CD14-positive monocyte (primary cell): ENCODE measurements at regions of chr11 and their contacts with region 1.

Region 1: DNA sequence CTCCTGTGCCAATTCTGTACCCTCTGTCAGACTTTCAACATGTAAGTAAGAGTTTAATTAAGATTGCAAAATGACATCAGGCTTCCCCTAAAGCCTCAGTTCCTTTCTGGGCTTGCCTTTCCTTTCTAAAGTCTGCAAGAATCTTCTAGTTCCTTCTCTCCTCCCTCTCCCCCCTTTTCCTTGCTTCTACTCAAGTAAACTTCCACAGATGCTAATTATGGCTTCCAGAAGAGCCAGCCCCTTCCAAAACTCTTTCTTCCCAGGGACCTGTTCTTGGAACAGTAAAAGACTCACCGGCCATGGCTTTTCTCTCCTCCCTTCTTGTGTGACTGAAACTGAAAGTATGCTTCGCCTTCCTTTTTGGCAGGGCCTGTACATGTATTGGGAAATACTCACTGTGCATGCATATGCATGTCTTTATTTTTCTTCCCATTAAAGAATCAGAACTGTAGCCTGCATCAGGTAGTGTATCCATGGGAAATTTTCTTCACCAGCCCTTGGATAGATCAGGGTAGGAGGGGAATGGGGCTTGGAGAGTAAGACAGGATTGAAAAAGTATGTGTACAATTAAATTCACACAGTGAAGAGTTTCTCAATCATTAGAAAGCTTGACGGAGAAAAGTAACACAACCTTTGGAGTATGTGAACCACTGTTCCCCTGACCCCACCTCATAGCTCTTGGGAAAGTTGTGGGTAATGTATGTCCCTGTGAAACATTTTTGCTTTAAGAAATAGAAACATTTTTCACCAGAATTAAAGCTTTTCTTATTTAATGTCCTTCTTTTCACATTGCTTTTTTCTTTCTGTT is at the start of gene CASP1:
- DNase-seq: peak; percentile 59 to 83 (median 76)
- H3K4me3 ChIP-seq: peak within 1 kb of the TSS; percentile 59 to 99 (median 81)
- H3K4me3 Mint-ChIP-seq: peak within 1 kb of the TSS; percentile 98 to 99
- H3K27ac ChIP-seq: peak within 1 kb of the TSS; percentile 69 to 89
- H3K27ac Mint-ChIP-seq: peak within 1 kb of the TSS; percentile 89 to 100 (median 99)
- H3K4me1 ChIP-seq: peaks cover 40 to 74% of the 10 kb centered on the region in 2 donors
- H3K4me1 Mint-ChIP-seq: peaks cover 64% of the 10 kb centered on the region
- H3K27me3 ChIP-seq: no peaks in the 10 kb centered on the region
- H3K27me3 Mint-ChIP-seq: peaks cover 0 to 1% (median 0%) of the 10 kb centered on the region in 3 donors
- CTCF ChIP-seq: no peak
- polyA plus RNA-seq, gene CASP1: 210 to 460 (median 433) TPM

Region 2: GRCh38 chr11:104843150-104843836 is 191.7 kb before region 1 on chr11:
- intact Hi-C with region 1: loop called in 1 of 2 experiments (anchors 10 kb)
- DNase-seq: peak in 2 of 3 donors; percentile 37 to 38
- H3K4me3 ChIP-seq: no peak overlapping the region
- H3K4me3 Mint-ChIP-seq: no peak overlapping the region
- H3K27ac ChIP-seq: peak overlapping the region in 1 of 2 donors; percentile 64
- H3K27ac Mint-ChIP-seq: peak overlapping the region in 5 of 7 donors; percentile 18 to 79 (median 41)
- H3K4me1 ChIP-seq: peaks cover 21 to 40% of the 10 kb centered on the region in 2 donors
- H3K4me1 Mint-ChIP-seq: peaks cover 30% of the 10 kb centered on the region
- H3K27me3 ChIP-seq: no peaks in the 10 kb centered on the region
- H3K27me3 Mint-ChIP-seq: no peaks in the 10 kb centered on the region
- CTCF ChIP-seq: no peak

Region 3: DNA sequence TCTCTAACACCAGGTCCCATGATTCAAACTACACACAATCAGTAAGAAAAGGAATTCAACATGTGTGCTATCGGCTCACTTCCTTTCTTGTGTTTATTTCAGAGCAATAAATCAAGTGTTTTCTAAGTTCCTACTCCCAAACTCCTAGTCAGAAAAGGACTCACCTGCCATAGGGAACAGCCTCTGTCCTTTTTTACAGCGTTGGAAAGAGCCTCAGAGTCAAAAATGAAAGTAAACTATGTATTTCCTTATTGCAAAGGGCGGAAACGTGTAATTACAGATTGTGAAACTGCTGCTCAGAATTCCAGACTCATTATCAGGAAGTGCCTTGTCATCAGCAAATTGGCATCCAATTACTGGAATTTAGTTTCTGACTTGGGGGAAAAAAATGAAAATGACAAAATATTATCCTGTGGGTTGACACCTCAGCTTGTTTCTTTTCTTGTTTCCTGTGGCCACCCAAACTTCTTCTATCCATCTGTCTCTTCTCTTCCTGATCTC is 66.6 kb before region 1 on chr11 and contains the start of gene CASP4:
- intact Hi-C with region 1: loop called in 1 of 2 experiments (anchors 5 kb)
- DNase-seq: peak; percentile 75 to 97 (median 92)
- H3K4me3 ChIP-seq: peak within 1 kb of the TSS; percentile 77 to 99 (median 78)
- H3K4me3 Mint-ChIP-seq: peak within 1 kb of the TSS; percentile 84 to 89
- H3K27ac ChIP-seq: peak within 1 kb of the TSS; percentile 31 to 96
- H3K27ac Mint-ChIP-seq: peak within 1 kb of the TSS; percentile 95 to 99 (median 97)
- H3K4me1 ChIP-seq: peaks cover 20 to 31% of the 10 kb centered on the region in 2 donors
- H3K4me1 Mint-ChIP-seq: peaks cover 38% of the 10 kb centered on the region
- H3K27me3 ChIP-seq: no peaks in the 10 kb centered on the region
- H3K27me3 Mint-ChIP-seq: peaks cover 0 to 2% (median 0%) of the 10 kb centered on the region in 3 donors
- CTCF ChIP-seq: no peak
- polyA plus RNA-seq, gene CASP4: 148 to 213 (median 163) TPM

Region 4: GRCh38 chr11:104992781-104993180 is 42.2 kb before region 1 on chr11:
- intact Hi-C with region 1: no loop called
- DNase-seq: no peak
- H3K4me3 ChIP-seq: no peak overlapping the region
- H3K4me3 Mint-ChIP-seq: no peak overlapping the region
- H3K27ac ChIP-seq: no peak overlapping the region
- H3K27ac Mint-ChIP-seq: no peak overlapping the region
- H3K4me1 ChIP-seq: no peaks in the 10 kb centered on the region
- H3K4me1 Mint-ChIP-seq: no peaks in the 10 kb centered on the region
- H3K27me3 ChIP-seq: no peaks in the 10 kb centered on the region
- H3K27me3 Mint-ChIP-seq: no peaks in the 10 kb centered on the region
- CTCF ChIP-seq: no peak

Region 5: GRCh38 chr11:105109855-105110687 is 75.1 kb after region 1 on chr11:
- intact Hi-C with region 1: loop called in 1 of 2 experiments (anchors 10 kb)
- DNase-seq: peak in 2 of 3 donors; percentile 19 to 41
- H3K4me3 ChIP-seq: peak overlapping the region; percentile 15 to 62 (median 16)
- H3K4me3 Mint-ChIP-seq: peak overlapping the region; percentile 4 to 77
- H3K27ac ChIP-seq: peak overlapping the region in 1 of 2 donors; percentile 67
- H3K27ac Mint-ChIP-seq: peak overlapping the region; percentile 46 to 88 (median 70)
- H3K4me1 ChIP-seq: peaks cover 18 to 20% of the 10 kb centered on the region in 2 donors
- H3K4me1 Mint-ChIP-seq: peaks cover 29% of the 10 kb centered on the region
- H3K27me3 ChIP-seq: no peaks in the 10 kb centered on the region
- H3K27me3 Mint-ChIP-seq: peaks cover 0 to 4% (median 3%) of the 10 kb centered on the region in 3 donors
- CTCF ChIP-seq: no peak